BJ (cell line): ENCODE measurements at regions of chr10 and their contacts with region 1.

Region 1: DNA sequence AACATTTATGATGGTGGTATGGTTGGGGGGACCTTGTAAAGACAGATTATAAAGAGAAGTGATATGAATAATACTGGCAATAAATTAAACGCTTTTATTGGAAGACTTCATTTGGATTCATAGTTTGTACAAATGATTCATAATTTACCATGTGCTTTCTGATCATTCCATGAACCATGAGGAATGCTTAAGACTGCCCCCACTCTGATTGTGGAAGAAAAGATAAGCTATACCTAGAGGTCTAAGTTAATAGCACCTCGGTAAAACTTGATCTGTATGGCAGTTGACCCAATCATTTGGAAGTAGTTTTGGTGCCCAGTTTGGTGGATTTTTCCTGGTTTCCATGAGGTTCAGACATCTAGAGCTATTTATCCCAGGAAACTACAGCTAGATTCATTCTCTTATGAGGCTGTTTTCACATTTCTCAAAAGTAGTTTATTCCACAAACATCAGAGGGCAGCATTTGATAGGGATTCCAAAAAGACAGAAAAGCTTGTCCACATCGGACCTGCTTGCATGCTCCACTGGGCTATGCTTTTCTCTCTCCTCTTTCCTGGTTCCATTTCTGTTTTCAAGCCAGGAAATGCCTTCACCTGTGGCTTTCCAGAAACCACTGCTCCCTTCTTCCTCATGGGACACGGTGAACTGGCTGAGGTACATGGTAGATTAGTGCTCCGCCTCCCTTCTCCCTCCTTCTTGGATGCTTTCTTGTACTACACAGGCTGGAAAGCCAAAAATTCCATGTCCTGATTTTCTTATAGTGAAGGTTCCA is 29.2 kb downstream of the TFAM start:
- DNase-seq: peak; percentile 27
- H3K4me3 ChIP-seq: no peak overlapping the region
- H3K27me3 ChIP-seq: no peaks in the 10 kb centered on the region
- CTCF ChIP-seq: peak; percentile 56

Region 2: GRCh38 chr10:58435297-58435985 is 21.0 kb after region 1 on chr10:
- CTCF ChIA-PET with region 1: interaction called, 10 read pairs
- POLR2A ChIA-PET with region 1: no interaction called
- DNase-seq: peak; percentile 98
- H3K4me3 ChIP-seq: no peak overlapping the region
- H3K27me3 ChIP-seq: no peaks in the 10 kb centered on the region
- CTCF ChIP-seq: 0 out of 2 replicates have a peak, but pooled peaks have one; percentile 26

Region 3: GRCh38 chr10:58531084-58531695 is 116.7 kb after region 1 on chr10:
- CTCF ChIA-PET with region 1: interaction called, 15 read pairs
- POLR2A ChIA-PET with region 1: no interaction called
- DNase-seq: no peak
- H3K4me3 ChIP-seq: no peak overlapping the region
- H3K27me3 ChIP-seq: no peaks in the 10 kb centered on the region
- CTCF ChIP-seq: peak; percentile 76

Region 4: GRCh38 chr10:58641095-58641531 is 226.7 kb after region 1 on chr10:
- CTCF ChIA-PET with region 1: interaction called, 12 read pairs
- POLR2A ChIA-PET with region 1: no interaction called
- DNase-seq: peak; percentile 99
- H3K4me3 ChIP-seq: no peak overlapping the region
- H3K27me3 ChIP-seq: no peaks in the 10 kb centered on the region
- CTCF ChIP-seq: peak; percentile 27; the same call in 1 of the 2 replicates